ENCODE measurements at regions of chr5 and their contacts with region 1.

Region 1: DNA sequence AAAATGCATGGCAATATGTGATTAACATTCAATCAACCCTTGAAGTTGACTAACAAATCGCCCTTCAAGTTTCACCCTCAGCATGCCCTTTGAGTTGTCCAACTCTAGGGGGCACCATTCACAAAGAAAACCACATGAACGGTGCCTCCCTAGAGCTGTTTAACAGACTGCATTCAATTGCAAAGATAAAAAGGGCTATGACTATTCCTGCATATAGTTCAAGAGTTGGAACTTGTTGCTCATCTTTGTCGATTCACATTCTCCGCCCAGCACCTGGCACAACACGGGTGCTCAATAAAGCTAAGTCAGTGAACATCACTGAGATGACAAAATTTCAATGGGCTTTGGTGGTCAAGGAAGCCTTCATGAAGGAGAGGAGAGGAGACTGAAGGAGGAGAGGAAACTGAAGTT is 69.6 kb upstream of the SLC30A5 start:
- DNase-seq: no peak
- H3K4me3 ChIP-seq: no peak overlapping the region
- H3K27me3 ChIP-seq: peaks cover 3% of the 10 kb centered on the region
- CTCF ChIP-seq: peak; percentile 56

Region 2: GRCh38 chr5:68593191-68593675 is 431.0 kb before region 1 on chr5:
- CTCF ChIA-PET with region 1: no interaction called
- POLR2A ChIA-PET with region 1: interaction called, 10 read pairs
- DNase-seq: no peak
- H3K4me3 ChIP-seq: no peak overlapping the region
- H3K27me3 ChIP-seq: no peaks in the 10 kb centered on the region
- CTCF ChIP-seq: no peak

Region 3: DNA sequence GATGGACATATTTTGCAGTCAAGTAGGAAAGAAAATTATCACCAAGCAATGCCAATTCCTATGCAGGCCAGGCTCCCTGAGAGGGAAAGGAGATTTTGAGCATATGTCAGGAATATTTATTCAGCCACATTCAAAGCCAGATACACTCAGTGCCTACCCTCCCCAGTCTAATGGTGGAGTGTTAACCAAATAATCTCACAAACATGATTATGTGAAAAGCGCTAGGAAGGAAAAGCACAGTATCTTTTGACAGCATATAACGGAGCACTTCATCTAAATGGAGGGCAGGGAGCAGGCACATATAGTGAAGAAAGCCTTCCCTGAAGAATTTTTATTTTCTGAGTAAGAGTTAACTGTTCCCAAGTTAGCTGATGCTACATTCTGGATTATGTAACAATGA is 10.8 kb before region 1 on chr5:
- CTCF ChIA-PET with region 1: interaction called, 28 read pairs
- POLR2A ChIA-PET with region 1: no interaction called
- DNase-seq: no peak
- H3K4me3 ChIP-seq: no peak overlapping the region
- H3K27me3 ChIP-seq: peaks cover 2% of the 10 kb centered on the region; the same call in 1 of the 2 replicates
- CTCF ChIP-seq: no peak

Region 4: GRCh38 chr5:69035665-69036064 is 11.4 kb after region 1 on chr5:
- CTCF ChIA-PET with region 1: interaction called, 11 read pairs
- POLR2A ChIA-PET with region 1: no interaction called
- DNase-seq: no peak
- H3K4me3 ChIP-seq: no peak overlapping the region
- H3K27me3 ChIP-seq: no peaks in the 10 kb centered on the region; the same call in 1 of the 2 replicates
- CTCF ChIP-seq: no peak

Measured in BJ (cell line).